ENCODE measurements at regions of chr15 and their contacts with region 1.

Region 1: GRCh38 chr15:56491110-56491722 is 26.3 kb upstream of the MNS1 start:
- DNase-seq: peak; percentile 79
- ATAC-seq: peak; percentile 61
- H3K4me3 ChIP-seq: no peak overlapping the region
- H3K27ac ChIP-seq: no peak overlapping the region
- H3K4me1 ChIP-seq: peaks cover 17% of the 10 kb centered on the region; the same call in 1 of the 2 replicates
- H3K27me3 ChIP-seq: no peaks in the 10 kb centered on the region
- CTCF ChIP-seq: peak; percentile 84

Region 2: GRCh38 chr15:56639628-56640027 is 148.4 kb after region 1 on chr15:
- CTCF ChIA-PET with region 1: no interaction called
- POLR2A ChIA-PET with region 1: no interaction called
- intact Hi-C with region 1: loop called (anchors 10 kb)
- DNase-seq: peak; percentile 16
- ATAC-seq: peak; percentile 54
- H3K4me3 ChIP-seq: no peak overlapping the region
- H3K27ac ChIP-seq: no peak overlapping the region
- H3K4me1 ChIP-seq: peaks cover 16% of the 10 kb centered on the region; the same call in 1 of the 2 replicates
- H3K27me3 ChIP-seq: no peaks in the 10 kb centered on the region
- CTCF ChIP-seq: no peak

Region 3: DNA sequence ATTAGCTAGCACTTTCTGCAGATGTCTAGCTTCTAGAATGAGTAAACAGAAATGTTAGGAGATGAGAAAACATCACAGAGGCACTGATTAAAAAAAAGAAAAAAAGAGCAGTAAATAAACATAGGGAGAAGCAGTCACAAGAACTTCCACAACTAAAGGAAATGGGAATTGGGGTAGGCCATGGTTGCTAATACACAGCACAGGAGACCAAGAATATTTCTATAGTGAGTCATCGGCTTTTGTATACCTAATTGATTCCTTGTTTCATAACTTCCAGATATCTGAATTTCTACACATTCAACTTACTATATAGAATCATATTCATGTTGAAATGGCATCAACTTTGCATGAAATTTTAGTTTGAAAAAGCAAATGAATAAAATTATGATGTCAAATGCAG is 380.0 kb after region 1 on chr15:
- CTCF ChIA-PET with region 1: no interaction called
- POLR2A ChIA-PET with region 1: no interaction called
- intact Hi-C with region 1: loop called (anchors 10 kb)
- DNase-seq: peak; percentile 80
- ATAC-seq: peak; percentile 97
- H3K4me3 ChIP-seq: no peak overlapping the region
- H3K27ac ChIP-seq: no peak overlapping the region
- H3K4me1 ChIP-seq: peaks cover 9% of the 10 kb centered on the region
- H3K27me3 ChIP-seq: no peaks in the 10 kb centered on the region
- CTCF ChIP-seq: no peak

Region 4: DNA sequence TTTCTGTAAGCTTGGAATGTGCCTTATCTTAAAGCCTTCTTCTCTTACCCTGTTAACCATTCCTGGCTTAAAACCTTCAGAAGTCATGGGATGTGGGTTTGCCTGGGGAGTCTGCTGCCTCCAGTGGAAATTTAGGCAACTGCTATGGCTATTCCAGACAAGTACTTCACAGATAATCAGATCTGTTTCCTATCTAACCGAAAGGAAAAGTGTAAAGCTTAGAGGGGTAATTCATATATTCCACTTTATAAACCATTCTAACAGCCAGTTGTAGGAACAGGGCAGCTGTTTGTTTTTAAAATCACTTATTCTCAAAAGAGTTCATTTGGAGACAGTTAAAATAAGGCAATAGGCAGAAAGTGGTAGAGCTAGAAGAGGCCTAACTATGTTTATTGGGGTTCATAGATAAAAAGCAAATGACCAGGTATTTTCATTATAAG is 647.2 kb after region 1 on chr15:
- CTCF ChIA-PET with region 1: no interaction called
- POLR2A ChIA-PET with region 1: no interaction called
- intact Hi-C with region 1: loop called (anchors 10 kb)
- DNase-seq: peak; percentile 66
- ATAC-seq: peak; percentile 67; the same call in 1 of the 2 replicates
- H3K4me3 ChIP-seq: no peak overlapping the region
- H3K27ac ChIP-seq: no peak overlapping the region
- H3K4me1 ChIP-seq: no peaks in the 10 kb centered on the region
- H3K27me3 ChIP-seq: no peaks in the 10 kb centered on the region
- CTCF ChIP-seq: peak; percentile 78

Region 5: GRCh38 chr15:57306161-57306943 is 815.1 kb after region 1 on chr15:
- CTCF ChIA-PET with region 1: no interaction called
- POLR2A ChIA-PET with region 1: no interaction called
- intact Hi-C with region 1: loop called (anchors 5 kb)
- DNase-seq: peak; percentile 66
- ATAC-seq: peak; percentile 76
- H3K4me3 ChIP-seq: peak overlapping the region; percentile 57; the same call in 1 of the 2 replicates
- H3K27ac ChIP-seq: no peak overlapping the region
- H3K4me1 ChIP-seq: peaks cover 12% of the 10 kb centered on the region
- H3K27me3 ChIP-seq: no peaks in the 10 kb centered on the region
- CTCF ChIP-seq: peak; percentile 77